ENCODE measurements at regions of chr3 and their contacts with region 1.

Region 1: DNA sequence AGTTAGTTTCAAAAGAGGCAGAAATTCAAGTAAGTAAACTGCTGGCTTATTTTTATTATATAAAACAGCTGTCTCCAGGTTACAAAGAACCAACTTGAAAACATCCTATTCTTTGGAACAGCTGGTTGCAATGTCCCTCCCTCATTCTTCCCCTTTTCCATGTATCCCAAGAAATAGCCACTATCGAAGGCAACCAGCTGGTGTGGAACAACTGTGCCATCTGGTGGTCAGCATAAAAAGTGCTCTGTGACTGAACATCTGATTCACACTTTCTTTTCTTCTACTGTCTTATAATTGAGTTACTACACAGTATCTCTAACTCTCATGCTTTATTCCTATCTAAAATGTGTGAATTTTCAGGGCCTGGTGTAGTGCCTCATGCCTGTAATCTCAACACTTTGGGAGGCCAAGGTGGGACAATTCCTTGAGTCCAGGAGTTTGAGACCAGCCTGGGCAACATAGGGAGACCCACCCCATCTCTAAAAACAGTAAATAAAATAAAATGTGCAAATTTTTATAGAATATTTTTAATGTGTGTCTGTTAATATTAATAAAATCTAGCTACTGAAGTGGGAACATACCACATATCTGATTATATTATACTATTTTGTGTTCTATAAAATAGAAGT is 9.6 kb downstream of the OSBPL11 start:
- DNase-seq: peak; percentile 56
- ATAC-seq: peak; percentile 66
- H3K4me3 Mint-ChIP-seq: no peak overlapping the region
- H3K27ac Mint-ChIP-seq: no peak overlapping the region
- H3K4me1 Mint-ChIP-seq: peaks cover 15% of the 10 kb centered on the region
- H3K27me3 Mint-ChIP-seq: no peaks in the 10 kb centered on the region

Region 2: GRCh38 chr3:124928333-124929202 is 657.1 kb before region 1 on chr3:
- CTCF ChIA-PET with region 1: interaction called, 18 read pairs
- DNase-seq: peak; percentile 75
- ATAC-seq: peak; percentile 74
- H3K4me3 Mint-ChIP-seq: no peak overlapping the region
- H3K27ac Mint-ChIP-seq: no peak overlapping the region
- H3K4me1 Mint-ChIP-seq: peaks cover 14% of the 10 kb centered on the region
- H3K27me3 Mint-ChIP-seq: peaks cover 69% of the 10 kb centered on the region

Region 3: GRCh38 chr3:124995460-124995994 is 590.2 kb before region 1 on chr3:
- CTCF ChIA-PET with region 1: interaction called, 13 read pairs
- DNase-seq: peak; percentile 72
- ATAC-seq: peak; percentile 89
- H3K4me3 Mint-ChIP-seq: no peak overlapping the region
- H3K27ac Mint-ChIP-seq: peak overlapping the region; percentile 47
- H3K4me1 Mint-ChIP-seq: peaks cover 16% of the 10 kb centered on the region
- H3K27me3 Mint-ChIP-seq: no peaks in the 10 kb centered on the region

Region 4: GRCh38 chr3:125437631-125438435 is 147.9 kb before region 1 on chr3:
- CTCF ChIA-PET with region 1: interaction called, 13 read pairs
- DNase-seq: peak; percentile 62
- ATAC-seq: peak; percentile 33
- H3K4me3 Mint-ChIP-seq: no peak overlapping the region
- H3K27ac Mint-ChIP-seq: no peak overlapping the region
- H3K4me1 Mint-ChIP-seq: peaks cover 13% of the 10 kb centered on the region
- H3K27me3 Mint-ChIP-seq: peaks cover 10% of the 10 kb centered on the region

Measured in activated CD8-positive, alpha-beta memory T cell treated with anti-CD3 and anti-CD28 coated beads, Interleukin-2, amount 10 ng/mL, durations not matched to agents 7 days and 5 days (primary cell).